HepG2 (cell line): ENCODE measurements at regions of chr14 and their contacts with region 1.

Region 1: GRCh38 chr14:70567791-70568190 is 32.7 kb downstream of the MED6 start:
- DNase-seq: peak; percentile 64
- ATAC-seq: peak; percentile 98
- H3K4me3 ChIP-seq: no peak overlapping the region
- H3K27ac ChIP-seq: no peak overlapping the region
- H3K4me1 ChIP-seq: peaks cover 8% of the 10 kb centered on the region
- H3K27me3 ChIP-seq: no peaks in the 10 kb centered on the region
- CTCF ChIP-seq: peak; percentile 83
- EP300 ChIP-seq: no peak
- POLR2A ChIP-seq: no peak
- RAD21 ChIP-seq: peak; percentile 53

Region 2: GRCh38 chr14:70086685-70087379 is 481.0 kb before region 1 on chr14:
- CTCF ChIA-PET with region 1: interaction called, 6 read pairs
- POLR2A ChIA-PET with region 1: no interaction called
- in situ Hi-C with region 1: loop called (anchors 25 kb)
- intact Hi-C with region 1: loop called (anchors 10 kb)
- DNase-seq: peak; percentile 14
- ATAC-seq: peak; percentile 34; the same call in 1 of the 3 replicates
- H3K4me3 ChIP-seq: no peak overlapping the region
- H3K27ac ChIP-seq: no peak overlapping the region
- H3K4me1 ChIP-seq: no peaks in the 10 kb centered on the region
- H3K27me3 ChIP-seq: peaks cover 0 to 1% of the 10 kb centered on the region in 2 experiments; a peak in 3 of 5 replicates
- CTCF ChIP-seq: peak; percentile 64
- EP300 ChIP-seq: no peak
- POLR2A ChIP-seq: no peak
- RAD21 ChIP-seq: 0 out of 2 replicates have a peak, but pooled peaks have one; percentile 10

Region 3: DNA sequence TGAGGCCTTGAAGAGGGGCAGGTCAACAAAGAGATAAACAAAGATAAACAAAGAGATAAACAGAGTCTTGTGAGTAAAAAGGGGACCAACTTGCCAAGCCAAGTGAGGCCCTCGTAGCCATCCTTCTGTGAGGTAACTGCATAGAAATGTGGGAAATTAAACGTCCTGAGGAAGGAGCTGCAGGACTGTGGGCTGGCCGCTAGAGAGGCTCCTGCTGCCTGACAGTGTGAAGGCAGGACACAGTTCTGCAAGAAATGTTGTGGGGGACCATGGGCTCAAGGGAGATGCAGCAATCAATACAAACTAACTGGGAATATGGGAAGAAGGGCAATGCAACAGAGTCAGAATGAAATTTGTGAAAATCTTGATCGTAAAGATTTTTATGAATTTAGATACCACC is 470.9 kb before region 1 on chr14:
- CTCF ChIA-PET with region 1: no interaction called
- POLR2A ChIA-PET with region 1: no interaction called
- in situ Hi-C with region 1: loop called (anchors 25 kb)
- intact Hi-C with region 1: loop called (anchors 10 kb)
- DNase-seq: peak; percentile 9
- ATAC-seq: peak; percentile 92
- H3K4me3 ChIP-seq: no peak overlapping the region
- H3K27ac ChIP-seq: no peak overlapping the region
- H3K4me1 ChIP-seq: peaks cover 9% of the 10 kb centered on the region; the same call in 1 of the 2 replicates
- H3K27me3 ChIP-seq: no peaks in the 10 kb centered on the region; a peak in 2 of 5 replicates
- CTCF ChIP-seq: peak; percentile 47
- EP300 ChIP-seq: no peak
- POLR2A ChIP-seq: no peak
- RAD21 ChIP-seq: no peak

Region 4: GRCh38 chr14:70359181-70360090 is 208.4 kb before region 1 on chr14 and contains the start of gene COX16:
- CTCF ChIA-PET with region 1: no interaction called
- POLR2A ChIA-PET with region 1: no interaction called
- in situ Hi-C with region 1: no loop called
- intact Hi-C with region 1: loop called (anchors 1 kb)
- DNase-seq: peak; percentile 91
- ATAC-seq: peak; percentile 97
- H3K4me3 ChIP-seq: peak within 1 kb of the TSS; percentile 74 to 93 (median 89)
- H3K27ac ChIP-seq: peak within 1 kb of the TSS; percentile 85
- H3K4me1 ChIP-seq: peaks cover 29% of the 10 kb centered on the region
- H3K27me3 ChIP-seq: no peaks in the 10 kb centered on the region; a peak in 2 of 5 replicates
- CTCF ChIP-seq: no peak
- EP300 ChIP-seq: peak in 1 of 2 experiments; percentile 53; a peak in 1 of 4 replicates
- POLR2A ChIP-seq: peak; percentile 86 to 89
- RAD21 ChIP-seq: peak; percentile 61
- total RNA-seq, gene COX16: 71.0 and 88.1 TPM in 2 replicates

Region 5: GRCh38 chr14:70398706-70399431 is 168.9 kb before region 1 on chr14:
- CTCF ChIA-PET with region 1: no interaction called
- POLR2A ChIA-PET with region 1: no interaction called
- in situ Hi-C with region 1: no loop called
- intact Hi-C with region 1: loop called (anchors 5 kb)
- DNase-seq: no peak
- ATAC-seq: peak; percentile 62
- H3K4me3 ChIP-seq: no peak overlapping the region
- H3K27ac ChIP-seq: no peak overlapping the region
- H3K4me1 ChIP-seq: peaks cover 22% of the 10 kb centered on the region
- H3K27me3 ChIP-seq: no peaks in the 10 kb centered on the region
- CTCF ChIP-seq: no peak
- EP300 ChIP-seq: no peak
- POLR2A ChIP-seq: no peak
- RAD21 ChIP-seq: no peak

Region 6: GRCh38 chr14:70648346-70648745 is 80.6 kb after region 1 on chr14:
- CTCF ChIA-PET with region 1: no interaction called
- POLR2A ChIA-PET with region 1: no interaction called
- in situ Hi-C with region 1: no loop called
- intact Hi-C with region 1: no loop called
- DNase-seq: no peak
- ATAC-seq: no peak
- H3K4me3 ChIP-seq: no peak overlapping the region
- H3K27ac ChIP-seq: no peak overlapping the region
- H3K4me1 ChIP-seq: no peaks in the 10 kb centered on the region
- H3K27me3 ChIP-seq: peaks cover 2 to 9% of the 10 kb centered on the region in 2 experiments
- CTCF ChIP-seq: no peak
- EP300 ChIP-seq: no peak
- POLR2A ChIP-seq: no peak
- RAD21 ChIP-seq: no peak